Left cardiac atrium (tissue), 4 donors: ENCODE measurements at regions of chr4 and their contacts with region 1.

Region 1: GRCh38 chr4:158729716-158730559 is 6.7 kb upstream of the PPID start:
- DNase-seq: peak; percentile 51
- ATAC-seq: peak; percentile 95 to 96

Region 2: DNA sequence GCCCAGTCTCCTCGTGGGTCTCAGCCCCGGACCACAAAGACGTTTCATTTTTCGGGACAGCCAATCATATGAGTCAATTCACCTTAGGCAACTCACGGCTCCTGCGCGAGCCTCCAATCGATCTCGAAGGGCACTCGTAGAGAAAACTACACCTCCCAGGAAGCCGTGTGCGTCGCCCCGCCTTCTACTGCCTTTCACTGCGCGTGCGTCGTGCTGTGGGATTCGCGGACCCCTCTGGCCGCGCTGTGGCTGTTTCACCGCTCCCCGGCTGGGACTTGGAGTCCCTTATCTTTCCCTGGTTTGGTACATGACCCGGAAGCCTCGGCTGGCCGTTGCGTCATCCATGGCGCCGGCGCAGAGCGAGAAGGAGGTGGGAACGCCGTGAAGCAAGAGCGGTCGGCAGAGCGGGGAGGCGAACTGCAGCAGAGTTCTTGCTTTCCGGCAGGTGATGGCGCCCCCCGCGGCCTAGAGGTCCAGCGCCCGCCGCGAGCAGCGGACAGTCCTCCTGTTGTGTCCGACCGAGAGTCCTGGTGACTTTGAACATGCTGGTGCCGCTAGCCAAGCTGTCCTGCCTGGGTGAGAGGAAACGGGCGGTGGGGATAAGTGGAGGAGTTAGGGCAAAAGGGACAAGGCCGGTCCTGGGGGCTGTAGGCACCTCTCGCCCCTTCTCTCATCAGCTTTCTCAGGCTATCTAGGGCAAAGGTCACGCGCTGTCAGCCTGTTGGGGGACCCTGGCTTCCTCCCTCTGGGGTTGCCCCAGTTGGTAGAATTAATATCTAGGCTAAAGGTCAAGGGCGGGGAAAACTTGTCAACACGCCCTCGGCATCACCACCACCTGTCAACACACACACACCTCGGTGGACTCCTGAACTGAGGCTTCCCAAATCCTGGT is 57.8 kb before region 1 on chr4 and contains the start of gene ETFDH:
- intact Hi-C with region 1: no loop called
- DNase-seq: peak; percentile 99
- ATAC-seq: peak; percentile 94 to 97
- total RNA-seq, gene ETFDH: 161 to 171 TPM

Region 3: GRCh38 chr4:158768555-158769174 is 38.7 kb after region 1 on chr4 and contains the start of gene FNIP2:
- intact Hi-C with region 1: loop called in 1 of 2 experiments (anchors 5 kb)
- DNase-seq: peak; percentile 89
- ATAC-seq: peak; percentile 95 to 97
- total RNA-seq, gene FNIP2: 40.6 to 55.3 TPM

Region 4: GRCh38 chr4:158845311-158846041 is 115.5 kb after region 1 on chr4:
- intact Hi-C with region 1: loop called (anchors 2 to 5 kb)
- DNase-seq: no peak
- ATAC-seq: no peak

Region 5: DNA sequence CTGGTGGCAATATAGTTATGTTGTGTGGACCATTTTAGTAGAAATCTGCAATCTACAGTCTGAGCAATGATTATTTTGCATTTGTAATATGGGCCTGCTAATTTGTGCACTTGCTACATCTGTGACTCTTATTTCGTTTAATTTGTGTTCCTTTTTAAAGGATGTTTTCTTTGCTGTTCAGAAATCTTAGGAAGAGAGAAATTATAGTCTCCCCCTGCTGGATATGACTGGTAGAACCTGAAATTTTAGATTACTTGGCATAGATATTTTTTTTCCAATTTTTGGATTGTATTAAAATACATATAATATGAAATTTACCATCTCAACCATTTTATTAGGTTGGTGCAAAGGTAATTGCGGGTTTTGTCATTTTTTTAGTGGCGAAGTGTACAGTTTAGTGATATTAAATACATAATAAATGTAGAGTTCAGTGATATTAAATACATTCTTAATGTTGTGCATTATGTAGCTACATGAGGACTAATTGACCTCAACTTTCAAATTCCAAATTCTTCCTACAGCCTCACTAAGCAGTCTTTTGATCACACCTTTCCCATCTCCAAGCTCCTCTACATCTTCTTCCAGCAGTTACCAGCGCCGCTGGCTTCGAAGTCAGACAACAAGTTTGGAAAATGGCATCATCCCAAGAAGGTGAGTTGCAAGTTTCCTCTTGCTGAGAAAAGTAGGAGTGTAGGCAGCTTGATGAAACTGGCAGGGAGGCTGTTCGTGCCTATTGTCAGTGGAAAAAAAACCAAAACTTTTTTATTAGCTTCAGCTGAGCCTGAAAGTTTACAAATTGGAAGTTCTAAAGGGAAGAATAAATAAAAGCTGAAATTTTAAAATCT is 121.1 kb after region 1 on chr4:
- intact Hi-C with region 1: loop called (anchors 2 to 5 kb)
- DNase-seq: no peak
- ATAC-seq: peak in 1 of 2 donors; percentile 24

Region 6: GRCh38 chr4:159197260-159197884 is 467.4 kb after region 1 on chr4:
- intact Hi-C with region 1: loop called (anchors 5 to 10 kb)
- DNase-seq: no peak
- ATAC-seq: peak; percentile 23 to 34